ENCODE measurements at regions of chr13 and their contacts with region 1.

Region 1: GRCh38 chr13:38045307-38046048 is 175.9 kb upstream of the TRPC4 start:
- DNase-seq: peak; percentile 33
- ATAC-seq: peak; percentile 65
- H3K4me3 ChIP-seq: no peak overlapping the region
- H3K27ac ChIP-seq: no peak overlapping the region
- H3K4me1 ChIP-seq: no peaks in the 10 kb centered on the region
- H3K27me3 ChIP-seq: no peaks in the 10 kb centered on the region
- CTCF ChIP-seq: peak; percentile 61
- POLR2A ChIP-seq: no peak
- RAD21 ChIP-seq: peak; percentile 67

Region 2: DNA sequence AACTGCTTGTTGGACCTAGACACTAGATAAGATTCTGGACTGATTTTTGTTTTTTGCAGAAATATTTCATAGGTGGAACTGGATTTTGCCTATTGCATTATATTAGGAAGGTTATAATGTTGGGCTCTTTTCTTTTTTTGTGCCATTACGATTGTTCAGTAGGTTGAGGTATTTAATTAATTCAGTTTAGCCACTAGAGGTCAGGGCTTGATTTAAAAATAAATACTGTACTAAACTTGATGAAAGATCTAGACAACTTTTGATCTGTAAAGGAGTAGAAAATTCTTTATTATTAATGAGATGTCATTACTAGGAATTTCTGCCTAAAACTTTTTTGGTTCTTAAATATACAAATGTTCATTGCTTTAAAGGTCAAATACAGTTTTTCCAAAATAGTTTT is 970.8 kb before region 1 on chr13:
- CTCF ChIA-PET with region 1: no interaction called
- POLR2A ChIA-PET with region 1: no interaction called
- dilution Hi-C with region 1: no loop called
- in situ Hi-C with region 1: loop called (anchors 25 kb)
- intact Hi-C with region 1: loop called (anchors 10 kb)
- DNase-seq: peak; percentile 49
- ATAC-seq: peak; percentile 77
- H3K4me3 ChIP-seq: no peak overlapping the region
- H3K27ac ChIP-seq: no peak overlapping the region
- H3K4me1 ChIP-seq: 0 out of 2 replicates have a peak, but pooled peaks cover 3% of the 10 kb centered on the region
- H3K27me3 ChIP-seq: no peaks in the 10 kb centered on the region
- CTCF ChIP-seq: peak; percentile 54
- POLR2A ChIP-seq: no peak
- RAD21 ChIP-seq: peak; percentile 52

Region 3: DNA sequence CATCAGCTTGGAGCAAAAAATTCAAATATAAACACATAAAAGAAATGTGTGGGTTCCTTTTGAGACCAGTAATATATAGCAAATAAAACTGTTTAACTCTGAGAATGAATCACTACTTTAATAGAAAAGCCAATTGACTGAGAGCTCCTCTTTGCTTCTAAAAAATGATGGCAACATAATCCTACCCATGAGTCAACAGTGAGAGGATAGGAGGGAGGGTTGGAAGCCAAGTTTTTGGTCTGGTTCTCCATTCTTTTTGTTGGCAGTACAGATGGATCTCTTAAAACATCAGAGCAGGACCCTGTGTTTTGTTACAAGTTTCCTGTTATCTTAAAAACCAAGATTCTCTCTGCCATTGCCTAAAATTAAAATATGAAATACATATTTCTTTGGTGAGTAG is 396.9 kb before region 1 on chr13:
- CTCF ChIA-PET with region 1: no interaction called
- POLR2A ChIA-PET with region 1: no interaction called
- dilution Hi-C with region 1: no loop called
- in situ Hi-C with region 1: loop called (anchors 5 kb)
- intact Hi-C with region 1: no loop called
- DNase-seq: peak; percentile 88
- ATAC-seq: peak; percentile 84
- H3K4me3 ChIP-seq: no peak overlapping the region
- H3K27ac ChIP-seq: no peak overlapping the region
- H3K4me1 ChIP-seq: peaks cover 9% of the 10 kb centered on the region
- H3K27me3 ChIP-seq: no peaks in the 10 kb centered on the region
- CTCF ChIP-seq: no peak
- POLR2A ChIP-seq: no peak
- RAD21 ChIP-seq: no peak

Region 4: GRCh38 chr13:37869756-37870488 is 175.6 kb before region 1 on chr13 and contains the start of gene TRPC4:
- CTCF ChIA-PET with region 1: no interaction called
- POLR2A ChIA-PET with region 1: no interaction called
- dilution Hi-C with region 1: no loop called
- in situ Hi-C with region 1: no loop called
- intact Hi-C with region 1: loop called (anchors 1 kb)
- DNase-seq: peak; percentile 59
- ATAC-seq: peak; percentile 55
- H3K4me3 ChIP-seq: peak within 1 kb of the TSS; percentile 55
- H3K27ac ChIP-seq: peak within 1 kb of the TSS; percentile 21; the same call in 1 of the 2 replicates
- H3K4me1 ChIP-seq: peaks cover 4% of the 10 kb centered on the region
- H3K27me3 ChIP-seq: no peaks in the 10 kb centered on the region
- CTCF ChIP-seq: peak; percentile 47
- POLR2A ChIP-seq: no peak
- RAD21 ChIP-seq: peak; percentile 56
- total RNA-seq, gene TRPC4: 5.2 and 5.3 TPM in 2 replicates

Region 5: GRCh38 chr13:38914070-38914469 is 868.6 kb after region 1 on chr13:
- CTCF ChIA-PET with region 1: no interaction called
- POLR2A ChIA-PET with region 1: no interaction called
- dilution Hi-C with region 1: no loop called
- in situ Hi-C with region 1: no loop called
- intact Hi-C with region 1: no loop called
- DNase-seq: no peak
- ATAC-seq: no peak
- H3K4me3 ChIP-seq: no peak overlapping the region
- H3K27ac ChIP-seq: no peak overlapping the region
- H3K4me1 ChIP-seq: no peaks in the 10 kb centered on the region
- H3K27me3 ChIP-seq: no peaks in the 10 kb centered on the region
- CTCF ChIP-seq: no peak
- POLR2A ChIP-seq: no peak
- RAD21 ChIP-seq: no peak